Activated CD8-positive, alpha-beta T cell treated with anti-CD3 and anti-CD28 coated beads for 36 hours (primary cell): ENCODE measurements at regions of chr7 and their contacts with region 1.

Region 1: GRCh38 chr7:117008883-117009531 is 55.7 kb downstream of the ST7 start:
- DNase-seq: peak; percentile 65
- ATAC-seq: peak; percentile 11
- H3K4me3 Mint-ChIP-seq: peak overlapping the region; percentile 22
- H3K27ac Mint-ChIP-seq: peak overlapping the region; percentile 89
- H3K4me1 Mint-ChIP-seq: peaks cover 75% of the 10 kb centered on the region
- H3K27me3 Mint-ChIP-seq: no peaks in the 10 kb centered on the region
- CTCF ChIP-seq: no peak

Region 2: GRCh38 chr7:116736927-116737715 is 271.9 kb before region 1 on chr7:
- CTCF ChIA-PET with region 1: no interaction called
- POLR2A ChIA-PET with region 1: no interaction called
- intact Hi-C with region 1: no loop called
- DNase-seq: no peak
- ATAC-seq: no peak
- H3K4me3 Mint-ChIP-seq: no peak overlapping the region
- H3K27ac Mint-ChIP-seq: no peak overlapping the region
- H3K4me1 Mint-ChIP-seq: no peaks in the 10 kb centered on the region
- H3K27me3 Mint-ChIP-seq: peaks cover 7% of the 10 kb centered on the region
- CTCF ChIP-seq: no peak

Region 3: GRCh38 chr7:117025891-117026290 is 16.9 kb after region 1 on chr7:
- CTCF ChIA-PET with region 1: interaction called, 5 read pairs
- POLR2A ChIA-PET with region 1: interaction called, 3 read pairs
- intact Hi-C with region 1: loop called (anchors 1 kb)
- DNase-seq: no peak
- ATAC-seq: no peak
- H3K4me3 Mint-ChIP-seq: no peak overlapping the region
- H3K27ac Mint-ChIP-seq: no peak overlapping the region
- H3K4me1 Mint-ChIP-seq: peaks cover 18% of the 10 kb centered on the region
- H3K27me3 Mint-ChIP-seq: no peaks in the 10 kb centered on the region
- CTCF ChIP-seq: no peak

Region 4: GRCh38 chr7:117110480-117111337 is 101.7 kb after region 1 on chr7:
- CTCF ChIA-PET with region 1: interaction called, 10 read pairs
- POLR2A ChIA-PET with region 1: interaction called, 3 read pairs
- intact Hi-C with region 1: loop called (anchors 2 kb)
- DNase-seq: peak; percentile 77
- ATAC-seq: peak; percentile 97
- H3K4me3 Mint-ChIP-seq: peak overlapping the region; percentile 60
- H3K27ac Mint-ChIP-seq: peak overlapping the region; percentile 93
- H3K4me1 Mint-ChIP-seq: peaks cover 36% of the 10 kb centered on the region
- H3K27me3 Mint-ChIP-seq: no peaks in the 10 kb centered on the region
- CTCF ChIP-seq: no peak